GM18951 (cell line): ENCODE measurements at regions of chr12 and their contacts with region 1.

Region 1: GRCh38 chr12:114508529-114509129 is 102.7 kb upstream of the TBX5 start:
- POLR2A ChIP-seq: no peak

Region 2: DNA sequence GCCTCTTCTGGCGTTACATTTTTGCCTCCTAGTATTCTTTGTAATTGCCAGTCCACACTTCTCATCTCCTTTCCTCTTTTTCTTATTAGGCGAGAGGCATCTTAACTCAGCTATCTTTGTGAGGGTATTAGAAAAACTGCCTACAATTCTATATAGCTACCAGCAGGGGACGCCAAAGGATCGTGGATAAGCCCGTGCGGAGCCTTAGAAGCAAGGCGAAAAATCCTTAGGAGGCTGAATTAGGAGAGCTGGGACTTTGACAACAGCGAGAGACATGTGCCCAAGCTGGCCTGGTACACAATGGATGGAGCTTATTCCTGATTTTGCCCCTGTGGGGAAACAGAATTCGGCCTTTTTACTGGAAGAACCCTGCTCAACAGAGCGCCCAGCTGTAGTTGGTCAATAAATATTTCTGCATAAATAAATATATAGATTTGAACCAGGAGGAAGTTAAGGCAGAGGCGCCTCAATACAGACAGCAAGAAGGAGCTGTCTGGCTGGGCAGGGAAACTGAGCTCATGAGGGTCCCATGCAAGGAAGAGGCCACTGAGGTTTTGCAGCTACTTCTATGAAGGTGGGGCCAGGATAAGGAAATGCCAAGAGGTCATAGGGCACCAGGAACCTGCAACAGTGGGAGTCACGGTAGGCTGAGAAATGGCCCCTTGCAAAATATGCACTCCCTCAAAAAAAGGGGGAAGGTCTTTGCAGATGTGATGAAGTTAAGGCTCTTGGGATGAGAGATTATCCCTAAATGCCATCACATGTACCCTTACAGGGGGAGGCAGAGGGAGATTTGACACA is 527.9 kb before region 1 on chr12:
- in situ Hi-C with region 1: loop called (anchors 10 kb)
- POLR2A ChIP-seq: no peak